Activated CD4-positive, alpha-beta memory T cell treated with anti-CD3 and anti-CD28 coated beads for 36 hours (primary cell): ENCODE measurements at regions of chr7 and their contacts with region 1.

Region 1: GRCh38 chr7:37448636-37449361 is at the start of gene ELMO1:
- DNase-seq: peak; percentile 87
- H3K4me3 Mint-ChIP-seq: peak within 1 kb of the TSS; percentile 87
- H3K27ac Mint-ChIP-seq: peak within 1 kb of the TSS; percentile 96
- H3K4me1 Mint-ChIP-seq: peaks cover 44% of the 10 kb centered on the region
- H3K27me3 Mint-ChIP-seq: peaks cover 1% of the 10 kb centered on the region
- total RNA-seq, gene ELMO1: 88.7 to 93.3 TPM

Region 2: GRCh38 chr7:36389371-36390198 is 1059.2 kb before region 1 on chr7 and contains the start of gene ANLN:
- CTCF ChIA-PET with region 1: no interaction called
- POLR2A ChIA-PET with region 1: no interaction called
- intact Hi-C with region 1: loop called (anchors 10 kb)
- DNase-seq: peak; percentile 91
- H3K4me3 Mint-ChIP-seq: peak within 1 kb of the TSS; percentile 93
- H3K27ac Mint-ChIP-seq: peak within 1 kb of the TSS; percentile 88
- H3K4me1 Mint-ChIP-seq: peaks cover 24% of the 10 kb centered on the region
- H3K27me3 Mint-ChIP-seq: no peaks in the 10 kb centered on the region
- total RNA-seq, gene ANLN: 46.6 to 54.7 TPM

Region 3: DNA sequence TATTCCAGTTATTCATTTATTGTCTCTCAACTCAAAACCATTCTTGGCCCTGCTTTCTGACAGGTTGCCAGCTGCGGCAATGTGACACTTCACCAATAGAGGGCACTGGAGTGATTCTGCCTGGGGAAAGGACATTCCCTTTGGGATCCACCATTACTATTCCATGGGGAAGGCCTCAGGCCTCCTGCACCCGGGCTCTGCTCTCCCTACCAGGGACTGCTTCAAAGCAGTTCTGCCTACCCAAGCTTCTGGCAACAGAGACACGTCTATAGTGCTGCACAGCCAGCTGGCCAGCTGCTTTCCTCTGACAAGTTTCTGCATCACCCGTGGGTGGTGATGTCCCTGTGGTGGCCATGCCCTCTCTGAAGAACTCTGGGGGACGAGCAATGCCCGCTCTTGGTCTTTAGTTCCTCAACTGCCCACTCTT is 164.0 kb before region 1 on chr7:
- CTCF ChIA-PET with region 1: interaction called, 18 read pairs
- POLR2A ChIA-PET with region 1: no interaction called
- intact Hi-C with region 1: loop called (anchors 1 kb)
- DNase-seq: peak; percentile 57
- H3K4me3 Mint-ChIP-seq: no peak overlapping the region
- H3K27ac Mint-ChIP-seq: no peak overlapping the region
- H3K4me1 Mint-ChIP-seq: peaks cover 45% of the 10 kb centered on the region
- H3K27me3 Mint-ChIP-seq: no peaks in the 10 kb centered on the region

Region 4: GRCh38 chr7:37297546-37297945 is 151.3 kb before region 1 on chr7:
- CTCF ChIA-PET with region 1: no interaction called
- POLR2A ChIA-PET with region 1: no interaction called
- intact Hi-C with region 1: no loop called
- DNase-seq: no peak
- H3K4me3 Mint-ChIP-seq: no peak overlapping the region
- H3K27ac Mint-ChIP-seq: peak overlapping the region; percentile 63
- H3K4me1 Mint-ChIP-seq: peaks cover 8% of the 10 kb centered on the region
- H3K27me3 Mint-ChIP-seq: no peaks in the 10 kb centered on the region

Region 5: GRCh38 chr7:37359662-37360444 is 88.9 kb before region 1 on chr7:
- CTCF ChIA-PET with region 1: interaction called, 69 read pairs
- POLR2A ChIA-PET with region 1: interaction called, 55 read pairs
- intact Hi-C with region 1: no loop called
- DNase-seq: peak; percentile 72
- H3K4me3 Mint-ChIP-seq: peak overlapping the region; percentile 54
- H3K27ac Mint-ChIP-seq: peak overlapping the region; percentile 93
- H3K4me1 Mint-ChIP-seq: peaks cover 92% of the 10 kb centered on the region
- H3K27me3 Mint-ChIP-seq: no peaks in the 10 kb centered on the region

Region 6: GRCh38 chr7:37433166-37433565 is 15.6 kb before region 1 on chr7:
- CTCF ChIA-PET with region 1: interaction called, 28 read pairs
- POLR2A ChIA-PET with region 1: interaction called, 8 read pairs
- intact Hi-C with region 1: loop called (anchors 2 kb)
- DNase-seq: no peak
- H3K4me3 Mint-ChIP-seq: no peak overlapping the region
- H3K27ac Mint-ChIP-seq: peak overlapping the region; percentile 78
- H3K4me1 Mint-ChIP-seq: peaks cover 92% of the 10 kb centered on the region
- H3K27me3 Mint-ChIP-seq: no peaks in the 10 kb centered on the region